Calu3 (cell line): ENCODE measurements at regions of chr16 and their contacts with region 1.

Region 1: DNA sequence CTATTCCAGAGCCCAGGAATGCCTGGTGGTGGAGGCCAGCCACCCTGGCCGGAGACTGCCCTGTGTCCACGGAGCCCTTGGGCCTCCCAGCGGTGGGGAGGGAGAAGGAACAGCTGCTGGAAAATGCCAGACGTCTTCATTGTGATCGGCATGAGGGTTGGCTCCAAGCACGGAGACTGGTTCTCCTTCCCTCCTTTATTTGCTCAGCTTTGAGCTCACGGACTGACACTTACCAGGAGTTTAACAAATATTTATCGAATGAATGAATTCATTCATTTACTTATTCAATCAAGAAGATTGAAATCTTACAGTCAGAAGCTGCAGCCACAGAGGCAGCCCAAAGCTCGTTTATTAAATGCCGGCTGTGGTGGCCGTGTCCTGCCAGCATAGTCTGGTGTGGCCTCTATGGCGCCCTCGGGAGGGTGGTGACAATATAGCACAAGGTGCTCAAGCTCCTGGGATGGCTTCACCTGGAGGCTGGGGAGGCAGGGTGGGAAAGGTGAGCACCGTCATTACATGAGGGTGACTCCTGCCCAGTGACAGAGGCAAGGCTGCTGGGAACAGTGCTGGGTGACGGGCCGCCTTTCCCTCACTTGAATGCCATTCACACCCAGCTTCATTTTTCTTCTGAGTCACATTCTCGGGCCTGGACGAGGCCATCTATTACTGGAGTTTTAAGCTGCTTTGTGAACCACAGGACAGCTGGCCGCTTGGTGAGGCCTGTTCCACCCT is 31.0 kb upstream of the JPH3 start:
- DNase-seq: peak; percentile 80
- H3K4me3 Mint-ChIP-seq: no peak overlapping the region
- H3K27ac Mint-ChIP-seq: no peak overlapping the region
- H3K4me1 Mint-ChIP-seq: peaks cover 11% of the 10 kb centered on the region
- H3K27me3 Mint-ChIP-seq: peaks cover 78% of the 10 kb centered on the region
- CTCF ChIP-seq: no peak

Region 2: DNA sequence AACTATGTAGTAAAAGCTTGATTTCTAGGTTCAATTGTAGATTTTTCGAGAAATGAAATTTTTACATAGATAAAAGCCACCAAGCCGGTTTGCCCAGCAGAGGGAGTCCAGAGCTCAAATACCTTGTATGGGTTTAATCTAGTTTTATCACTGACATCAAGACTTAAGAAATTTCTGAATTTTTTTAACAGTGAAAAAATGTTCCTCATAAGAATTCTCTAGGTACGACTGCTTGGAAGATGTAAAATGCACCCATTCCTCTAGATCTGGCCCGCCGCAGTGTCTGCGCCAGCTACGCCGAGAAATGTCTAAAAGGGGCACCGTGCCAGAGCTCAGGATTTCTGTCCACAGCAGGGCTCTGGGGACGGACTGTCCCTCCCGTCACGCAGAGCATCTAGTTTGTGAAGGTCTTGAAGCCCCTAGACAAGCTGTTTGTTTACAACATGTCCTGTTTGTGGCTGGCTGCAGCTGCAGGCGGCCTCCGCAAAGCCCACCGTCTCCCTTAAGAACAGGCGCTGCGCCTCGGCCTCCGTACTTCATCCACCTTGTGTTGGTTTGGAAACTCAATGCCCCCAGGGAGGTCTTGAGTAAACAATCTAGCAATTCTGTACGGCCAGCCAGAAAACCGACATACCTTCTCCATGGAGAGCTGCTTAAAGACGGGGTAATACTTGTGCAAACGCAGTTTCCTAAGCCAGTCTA is 154.3 kb before region 1 on chr16:
- CTCF ChIA-PET with region 1: interaction called, 17 read pairs
- intact Hi-C with region 1: loop called (anchors 10 kb)
- DNase-seq: peak; percentile 51
- H3K4me3 Mint-ChIP-seq: no peak overlapping the region
- H3K27ac Mint-ChIP-seq: no peak overlapping the region
- H3K4me1 Mint-ChIP-seq: no peaks in the 10 kb centered on the region
- H3K27me3 Mint-ChIP-seq: no peaks in the 10 kb centered on the region
- CTCF ChIP-seq: peak; percentile 47

Region 3: GRCh38 chr16:87461466-87461991 is 109.8 kb before region 1 on chr16:
- CTCF ChIA-PET with region 1: interaction called, 10 read pairs
- intact Hi-C with region 1: no loop called
- DNase-seq: peak; percentile 97
- H3K4me3 Mint-ChIP-seq: peak overlapping the region; percentile 34
- H3K27ac Mint-ChIP-seq: no peak overlapping the region
- H3K4me1 Mint-ChIP-seq: peaks cover 61% of the 10 kb centered on the region
- H3K27me3 Mint-ChIP-seq: no peaks in the 10 kb centered on the region
- CTCF ChIP-seq: peak; percentile 58

Region 4: DNA sequence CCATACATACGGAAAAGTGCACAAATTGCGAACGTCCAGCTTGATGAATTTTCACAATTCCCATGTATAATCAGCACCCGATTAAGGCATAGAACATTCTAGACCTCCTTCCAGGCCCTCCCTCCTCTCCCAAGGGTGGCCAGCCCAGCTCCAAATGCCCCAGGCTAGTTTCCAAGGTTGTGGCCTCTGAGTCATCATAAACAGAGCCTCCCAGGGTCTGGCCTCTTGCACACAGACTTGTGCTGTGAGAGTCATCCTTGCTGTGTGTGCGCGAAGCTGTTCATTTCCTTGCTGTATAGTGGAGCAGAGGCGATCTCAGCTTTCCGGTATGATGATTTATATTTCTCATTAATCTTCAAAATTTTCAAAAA is 10.5 kb after region 1 on chr16:
- CTCF ChIA-PET with region 1: interaction called, 11 read pairs
- intact Hi-C with region 1: no loop called
- DNase-seq: peak; percentile 81
- H3K4me3 Mint-ChIP-seq: peak overlapping the region; percentile 9
- H3K27ac Mint-ChIP-seq: no peak overlapping the region
- H3K4me1 Mint-ChIP-seq: peaks cover 29% of the 10 kb centered on the region
- H3K27me3 Mint-ChIP-seq: peaks cover 41% of the 10 kb centered on the region
- CTCF ChIP-seq: no peak